ENCODE measurements at regions of chr5 and their contacts with region 1.

Region 1: DNA sequence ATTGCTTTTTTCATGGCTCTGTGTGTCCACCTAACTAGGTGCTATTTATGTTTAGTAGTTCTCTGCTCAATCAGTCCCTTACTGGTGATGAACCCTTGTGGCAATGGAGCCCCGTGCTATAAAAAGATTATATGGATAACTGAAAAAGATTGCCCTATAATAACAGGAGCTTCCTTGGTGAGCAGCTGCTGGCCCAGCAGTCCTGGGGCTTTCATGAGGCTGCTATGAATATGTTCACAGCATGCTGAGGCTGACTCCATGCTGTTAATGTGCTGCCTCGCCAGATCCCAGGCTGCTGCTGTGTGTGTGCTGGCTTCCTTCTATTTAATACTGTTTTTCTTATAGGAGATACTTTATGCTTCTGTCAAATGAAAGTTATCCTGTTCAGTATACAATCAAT is 357.5 kb downstream of the TAF11L14 start:
- DNase-seq: no peak
- ATAC-seq: no peak
- H3K4me3 Mint-ChIP-seq: no peak overlapping the region
- H3K27ac Mint-ChIP-seq: no peak overlapping the region
- H3K4me1 Mint-ChIP-seq: no peaks in the 10 kb centered on the region
- H3K27me3 Mint-ChIP-seq: no peaks in the 10 kb centered on the region
- CTCF ChIP-seq: no peak

Region 2: DNA sequence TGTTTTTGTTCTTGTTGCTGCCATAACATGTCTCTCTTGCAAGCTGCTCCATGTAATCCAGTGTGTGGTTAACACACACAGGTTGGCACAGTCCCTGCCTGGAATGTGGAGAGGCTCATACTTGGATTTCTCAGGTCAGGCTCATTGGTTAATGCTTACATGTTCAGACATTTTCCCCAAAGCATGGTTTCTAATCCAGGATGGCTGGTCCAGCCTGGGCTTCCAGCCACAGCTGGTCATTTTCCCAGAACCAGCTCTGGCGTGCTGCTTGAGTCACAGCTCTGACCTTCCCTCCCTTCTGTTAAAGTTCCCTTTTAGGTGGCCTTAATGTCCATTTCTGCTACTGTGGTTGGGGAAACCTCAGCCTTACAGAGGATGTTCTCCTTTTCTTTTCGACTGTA is 63.2 kb before region 1 on chr5:
- CTCF ChIA-PET with region 1: no interaction called
- POLR2A ChIA-PET with region 1: interaction called, 11 read pairs
- intact Hi-C with region 1: no loop called
- DNase-seq: no peak
- ATAC-seq: no peak
- H3K4me3 Mint-ChIP-seq: no peak overlapping the region
- H3K27ac Mint-ChIP-seq: no peak overlapping the region
- H3K4me1 Mint-ChIP-seq: no peaks in the 10 kb centered on the region
- H3K27me3 Mint-ChIP-seq: no peaks in the 10 kb centered on the region
- CTCF ChIP-seq: no peak

Measured in activated B cell treated with CpG ODN at 0.5 μM for 24 hours (primary cell).